Posterior vena cava (tissue), 2 donors: ENCODE measurements at regions of chr6 and their contacts with region 1.

Region 1: GRCh38 chr6:35240840-35241801 is 18.4 kb upstream of the ZNF76 start:
- DNase-seq: peak; percentile 89

Region 2: GRCh38 chr6:35209081-35209480 is 32.0 kb before region 1 on chr6:
- intact Hi-C with region 1: loop called in 1 of 2 experiments (anchors 5 kb)
- DNase-seq: no peak